A549 (cell line): ENCODE measurements at regions of chr9 and their contacts with region 1.

Region 1: GRCh38 chr9:5832543-5833529 is at the start of gene ERMP1:
- DNase-seq: peak; percentile 86 to 88
- ATAC-seq: peak; percentile 91 to 95
- H3K4me3 ChIP-seq: peak within 1 kb of the TSS; percentile 82
- H3K27ac ChIP-seq: peak within 1 kb of the TSS; percentile 92 to 96
- H3K4me1 ChIP-seq: peaks cover 21% of the 10 kb centered on the region
- CTCF ChIP-seq: peak; percentile 87
- EP300 ChIP-seq: no peak
- POLR2A ChIP-seq: peak; percentile 75
- RAD21 ChIP-seq: peak; percentile 47 to 72
- polyA plus RNA-seq, gene ERMP1: 53.4 and 66.1 TPM in 2 replicates

Region 2: GRCh38 chr9:5799314-5799713 is 33.5 kb before region 1 on chr9:
- CTCF ChIA-PET with region 1: interaction called, 38 read pairs
- POLR2A ChIA-PET with region 1: no interaction called
- DNase-seq: peak; percentile 41 to 73
- ATAC-seq: peak; percentile 74 to 87
- H3K4me3 ChIP-seq: no peak overlapping the region
- H3K27ac ChIP-seq: peak overlapping the region; percentile 8 to 38; a peak in 2 of 6 replicates
- H3K4me1 ChIP-seq: peaks cover 21% of the 10 kb centered on the region
- CTCF ChIP-seq: peak; percentile 97
- EP300 ChIP-seq: no peak
- POLR2A ChIP-seq: no peak
- RAD21 ChIP-seq: peak; percentile 91 to 94

Region 3: GRCh38 chr9:5811751-5812150 is 21.1 kb before region 1 on chr9:
- CTCF ChIA-PET with region 1: interaction called, 30 read pairs
- POLR2A ChIA-PET with region 1: interaction called, 4 read pairs
- DNase-seq: no peak
- ATAC-seq: no peak
- H3K4me3 ChIP-seq: no peak overlapping the region
- H3K27ac ChIP-seq: no peak overlapping the region
- H3K4me1 ChIP-seq: peaks cover 30% of the 10 kb centered on the region
- CTCF ChIP-seq: no peak
- EP300 ChIP-seq: no peak
- POLR2A ChIP-seq: no peak
- RAD21 ChIP-seq: no peak

Region 4: DNA sequence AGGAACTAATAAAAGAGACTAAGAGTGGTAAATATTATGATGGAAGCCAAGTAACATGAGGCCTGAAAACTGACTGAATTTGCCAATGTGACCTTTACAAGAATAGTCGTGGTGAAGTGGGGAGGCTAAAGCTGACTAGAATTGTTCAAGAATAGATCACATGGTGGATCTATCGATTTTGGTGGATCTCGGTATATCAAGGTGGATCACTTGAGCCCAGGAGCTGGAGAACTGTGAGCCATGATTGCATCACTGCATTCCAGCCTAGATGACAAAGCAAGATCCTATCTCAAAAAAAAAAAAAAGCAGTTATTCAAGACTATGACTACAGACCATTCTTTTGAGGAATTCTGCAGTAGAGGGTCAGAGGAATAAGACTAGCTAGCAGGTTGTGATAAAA is 15.0 kb before region 1 on chr9:
- CTCF ChIA-PET with region 1: interaction called, 31 read pairs
- POLR2A ChIA-PET with region 1: interaction called, 4 read pairs
- DNase-seq: peak in 1 of 2 experiments; percentile 73
- ATAC-seq: peak; percentile 80 to 89
- H3K4me3 ChIP-seq: no peak overlapping the region
- H3K27ac ChIP-seq: peak overlapping the region; percentile 76 to 86
- H3K4me1 ChIP-seq: peaks cover 50% of the 10 kb centered on the region
- CTCF ChIP-seq: no peak
- EP300 ChIP-seq: no peak
- POLR2A ChIP-seq: no peak
- RAD21 ChIP-seq: no peak

Region 5: GRCh38 chr9:5843794-5844504 is 11.1 kb after region 1 on chr9:
- CTCF ChIA-PET with region 1: interaction called, 23 read pairs
- POLR2A ChIA-PET with region 1: interaction called, 4 read pairs
- DNase-seq: peak; percentile 57 to 81
- ATAC-seq: peak; percentile 79 to 85
- H3K4me3 ChIP-seq: no peak overlapping the region
- H3K27ac ChIP-seq: peak overlapping the region; percentile 69 to 87
- H3K4me1 ChIP-seq: peaks cover 53% of the 10 kb centered on the region
- CTCF ChIP-seq: no peak
- EP300 ChIP-seq: no peak
- POLR2A ChIP-seq: no peak
- RAD21 ChIP-seq: no peak; a peak in 1 of 5 replicates

Region 6: DNA sequence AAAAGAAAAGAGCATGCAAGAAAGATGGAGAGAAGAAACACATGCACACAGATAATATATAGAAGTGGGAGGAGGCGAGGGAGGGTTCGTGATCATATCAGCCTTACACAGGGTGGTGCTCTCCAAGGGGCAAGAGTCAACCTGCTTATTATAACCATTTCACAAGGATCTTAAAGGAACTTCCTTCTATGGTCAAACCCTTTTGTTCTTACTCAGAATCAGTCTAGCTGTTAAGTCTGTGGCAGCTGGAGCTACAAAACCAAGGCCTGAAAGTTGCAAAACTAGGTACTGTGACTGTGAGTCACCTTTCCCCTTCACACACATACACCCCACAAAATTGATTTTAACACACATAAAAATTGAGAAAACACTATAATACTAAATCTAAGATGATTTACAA is 18.6 kb after region 1 on chr9:
- CTCF ChIA-PET with region 1: interaction called, 11 read pairs
- POLR2A ChIA-PET with region 1: no interaction called
- DNase-seq: no peak
- ATAC-seq: peak; percentile 26 to 61; a peak in 2 of 6 replicates
- H3K4me3 ChIP-seq: no peak overlapping the region
- H3K27ac ChIP-seq: peak overlapping the region in 1 of 2 experiments; percentile 0; a peak in 1 of 6 replicates
- H3K4me1 ChIP-seq: peaks cover 10% of the 10 kb centered on the region; the same call in 1 of the 3 replicates
- CTCF ChIP-seq: no peak
- EP300 ChIP-seq: no peak
- POLR2A ChIP-seq: no peak
- RAD21 ChIP-seq: no peak

Region 7: DNA sequence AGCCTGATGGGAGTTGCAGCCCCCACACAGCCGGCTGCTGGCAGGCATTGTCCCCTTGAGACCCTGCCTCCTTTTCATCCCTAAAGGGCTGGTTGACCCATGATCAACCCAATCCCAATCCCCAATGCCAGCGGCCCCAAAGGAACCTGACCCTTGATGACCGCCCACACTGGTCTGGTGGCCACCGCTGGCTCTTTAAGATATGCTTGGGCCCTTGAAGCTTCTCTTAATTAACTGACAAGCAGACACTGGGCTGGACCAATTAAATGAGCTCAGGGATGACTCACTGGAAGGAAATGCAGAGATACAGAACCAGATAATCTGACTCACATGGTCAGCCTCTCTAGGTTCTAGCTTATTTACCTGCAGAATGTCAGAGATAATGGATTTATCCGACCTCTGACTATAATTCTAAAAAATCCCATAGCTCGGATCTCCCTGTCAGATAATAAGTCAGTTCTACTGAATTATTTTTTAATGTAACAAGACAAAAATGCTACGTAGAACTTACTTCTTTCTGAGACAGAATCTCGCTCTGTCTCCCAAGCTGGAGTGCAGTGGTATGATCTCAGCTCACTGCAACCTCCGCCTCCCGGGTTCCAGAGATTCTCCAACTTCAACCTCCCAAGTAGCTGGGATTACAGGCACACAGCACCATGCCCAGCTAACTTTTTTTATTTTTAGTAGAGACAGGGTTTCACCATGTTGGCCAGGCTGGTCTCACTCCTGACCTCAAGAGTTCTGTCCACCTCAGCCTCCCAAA is 46.8 kb after region 1 on chr9:
- CTCF ChIA-PET with region 1: interaction called, 11 read pairs
- POLR2A ChIA-PET with region 1: interaction called, 11 read pairs
- DNase-seq: peak; percentile 70 to 81
- ATAC-seq: peak; percentile 88 to 92
- H3K4me3 ChIP-seq: peak overlapping the region; percentile 26; the same call in 1 of the 3 replicates
- H3K27ac ChIP-seq: peak overlapping the region; percentile 69 to 91
- H3K4me1 ChIP-seq: peaks cover 34% of the 10 kb centered on the region
- CTCF ChIP-seq: no peak
- EP300 ChIP-seq: no peak
- POLR2A ChIP-seq: no peak
- RAD21 ChIP-seq: no peak